ENCODE measurements at regions of chr1 and their contacts with region 1.

Region 1: DNA sequence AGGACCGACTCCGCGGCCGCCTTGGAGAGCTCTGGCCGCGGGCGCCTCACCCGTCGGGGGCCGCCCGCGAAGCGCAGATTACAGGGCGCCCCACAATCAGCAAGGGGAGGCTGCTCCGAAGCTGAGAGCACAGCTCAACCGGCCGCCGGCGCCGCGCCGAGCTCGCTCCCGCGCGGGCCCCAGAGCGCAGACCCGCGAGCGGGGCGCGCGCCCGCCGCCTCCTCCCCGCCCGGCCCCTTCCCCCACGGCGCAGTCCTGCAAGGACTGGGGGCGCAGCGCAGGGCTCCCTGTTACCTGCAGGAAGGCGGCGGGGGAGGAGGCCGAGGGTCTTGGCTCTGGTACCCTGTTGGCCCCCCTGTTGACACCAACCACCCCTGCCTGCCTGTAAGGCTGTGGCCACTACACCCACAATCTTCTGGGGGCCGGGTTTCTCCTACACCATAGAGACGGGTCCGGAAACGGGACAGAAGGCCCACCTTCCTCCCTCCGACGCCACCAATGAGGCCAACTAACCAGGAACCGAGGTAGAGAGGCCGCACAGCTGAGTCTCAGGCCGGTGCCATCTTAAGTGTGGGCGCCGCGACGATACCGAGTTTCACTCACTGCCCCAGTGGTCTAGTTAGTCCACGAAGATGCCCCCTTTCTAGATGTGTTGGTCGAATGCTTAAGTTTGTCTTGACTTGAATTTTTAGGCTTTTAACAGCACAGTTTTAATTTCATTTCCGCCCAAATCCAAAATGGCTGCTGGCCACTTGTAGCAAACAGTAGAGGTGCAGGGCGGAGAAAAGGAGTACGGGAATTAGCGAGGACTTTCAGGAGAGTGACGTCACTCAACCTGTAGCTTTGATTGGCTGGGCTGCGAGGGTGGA is at the start of gene SCYL3:
- DNase-seq: peak; percentile 96 to 97 (median 96)
- H3K4me3 ChIP-seq: peak within 1 kb of the TSS; percentile 58 to 86
- H3K4me3 Mint-ChIP-seq: peak within 1 kb of the TSS; percentile 92 to 97 (median 94)
- H3K27ac ChIP-seq: peak within 1 kb of the TSS; percentile 98
- H3K27ac Mint-ChIP-seq: peak within 1 kb of the TSS; percentile 97 to 100 (median 100)
- H3K4me1 ChIP-seq: peaks cover 46% of the 10 kb centered on the region
- H3K4me1 Mint-ChIP-seq: peaks cover 35 to 51% (median 43%) of the 10 kb centered on the region in 4 donors
- H3K27me3 ChIP-seq: no peaks in the 10 kb centered on the region
- H3K27me3 Mint-ChIP-seq: peaks cover 0 to 2% of the 10 kb centered on the region in 2 donors
- total RNA-seq, gene SCYL3: 23.5 to 24.3 TPM

Region 2: DNA sequence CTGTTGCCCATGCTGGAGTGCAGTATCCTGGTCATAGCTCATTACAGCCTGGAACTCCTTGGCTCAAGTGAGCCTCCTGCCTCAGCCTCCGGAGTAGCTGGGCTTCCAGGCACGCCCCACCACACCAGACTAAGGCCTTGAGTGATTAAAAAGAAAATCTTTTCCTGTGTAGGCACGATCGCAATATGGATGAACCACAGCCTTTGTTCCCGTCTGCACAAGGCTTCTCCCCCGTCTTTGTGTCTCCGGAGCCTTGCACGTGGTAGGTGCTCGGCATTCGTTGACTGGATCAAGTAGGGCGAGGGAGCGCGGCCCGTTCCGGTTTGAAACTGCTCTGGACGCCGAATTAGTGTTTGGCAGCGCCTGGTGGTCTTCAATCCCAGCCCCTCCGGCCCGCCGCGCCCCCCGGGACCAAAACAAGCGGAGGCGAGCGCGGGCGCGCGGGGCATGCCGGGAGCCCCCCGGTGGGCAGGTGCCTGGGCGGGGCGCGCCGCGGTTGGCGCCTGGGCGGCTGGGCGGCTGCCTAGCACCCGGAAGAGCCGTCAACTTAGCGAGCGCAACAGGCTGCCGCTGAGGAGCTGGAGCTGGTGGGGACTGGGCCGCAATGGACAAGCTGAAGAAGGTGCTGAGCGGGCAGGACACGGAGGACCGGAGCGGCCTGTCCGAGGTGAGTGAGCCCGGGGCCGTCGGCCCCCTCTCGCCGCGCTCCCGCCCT is 1668.1 kb before region 1 on chr1 and contains the start of gene SFT2D2:
- CTCF ChIA-PET with region 1: no interaction called
- POLR2A ChIA-PET with region 1: no interaction called
- intact Hi-C with region 1: loop called (anchors 5 kb)
- DNase-seq: peak; percentile 78 to 85 (median 81)
- H3K4me3 ChIP-seq: peak within 1 kb of the TSS; percentile 70 to 84
- H3K4me3 Mint-ChIP-seq: peak within 1 kb of the TSS; percentile 95 to 98 (median 96)
- H3K27ac ChIP-seq: peak within 1 kb of the TSS; percentile 80
- H3K27ac Mint-ChIP-seq: peak within 1 kb of the TSS; percentile 87 to 98 (median 96)
- H3K4me1 ChIP-seq: peaks cover 31% of the 10 kb centered on the region
- H3K4me1 Mint-ChIP-seq: peaks cover 25 to 48% (median 38%) of the 10 kb centered on the region in 4 donors
- H3K27me3 ChIP-seq: no peaks in the 10 kb centered on the region
- H3K27me3 Mint-ChIP-seq: peaks cover 2% of the 10 kb centered on the region in 2 donors
- total RNA-seq, gene SFT2D2: 61.7 to 63.2 TPM

Region 3: GRCh38 chr1:169794530-169795416 is 99.0 kb before region 1 on chr1 and contains the start of gene METTL18:
- CTCF ChIA-PET with region 1: interaction called, 6 read pairs
- POLR2A ChIA-PET with region 1: interaction called, 57 read pairs
- intact Hi-C with region 1: loop called (anchors 1 kb)
- DNase-seq: peak; percentile 92 to 95 (median 93)
- H3K4me3 ChIP-seq: peak within 1 kb of the TSS; percentile 90 to 93
- H3K4me3 Mint-ChIP-seq: peak within 1 kb of the TSS; percentile 96 to 100 (median 98)
- H3K27ac ChIP-seq: peak within 1 kb of the TSS; percentile 93
- H3K27ac Mint-ChIP-seq: peak within 1 kb of the TSS; percentile 90 to 100 (median 99)
- H3K4me1 ChIP-seq: peaks cover 30% of the 10 kb centered on the region
- H3K4me1 Mint-ChIP-seq: peaks cover 36 to 56% (median 48%) of the 10 kb centered on the region in 4 donors
- H3K27me3 ChIP-seq: no peaks in the 10 kb centered on the region
- H3K27me3 Mint-ChIP-seq: no peaks in the 10 kb centered on the region
- total RNA-seq, gene METTL18: 21.0 to 23.8 TPM

Region 4: GRCh38 chr1:169824153-169824552 is 69.6 kb before region 1 on chr1:
- CTCF ChIA-PET with region 1: no interaction called
- POLR2A ChIA-PET with region 1: no interaction called
- intact Hi-C with region 1: no loop called
- DNase-seq: no peak
- H3K4me3 ChIP-seq: no peak overlapping the region
- H3K4me3 Mint-ChIP-seq: no peak overlapping the region
- H3K27ac ChIP-seq: no peak overlapping the region
- H3K27ac Mint-ChIP-seq: peak overlapping the region in 2 of 7 donors; percentile 32 to 40
- H3K4me1 ChIP-seq: no peaks in the 10 kb centered on the region
- H3K4me1 Mint-ChIP-seq: peaks cover 0 to 3% (median 0%) of the 10 kb centered on the region in 4 donors
- H3K27me3 ChIP-seq: no peaks in the 10 kb centered on the region
- H3K27me3 Mint-ChIP-seq: no peaks in the 10 kb centered on the region

Region 5: GRCh38 chr1:169928438-169929209 is 34.9 kb after region 1 on chr1:
- CTCF ChIA-PET with region 1: interaction called, 5 read pairs
- POLR2A ChIA-PET with region 1: interaction called, 14 read pairs
- intact Hi-C with region 1: loop called (anchors 2 kb)
- DNase-seq: peak in 4 of 5 donors; percentile 45 to 58 (median 49)
- H3K4me3 ChIP-seq: no peak overlapping the region
- H3K4me3 Mint-ChIP-seq: peak overlapping the region in 1 of 8 donors; percentile 2
- H3K27ac ChIP-seq: no peak overlapping the region
- H3K27ac Mint-ChIP-seq: peak overlapping the region in 1 of 7 donors; percentile 74
- H3K4me1 ChIP-seq: peaks cover 9% of the 10 kb centered on the region
- H3K4me1 Mint-ChIP-seq: peaks cover 6 to 11% (median 7%) of the 10 kb centered on the region in 4 donors
- H3K27me3 ChIP-seq: no peaks in the 10 kb centered on the region
- H3K27me3 Mint-ChIP-seq: no peaks in the 10 kb centered on the region

Region 6: DNA sequence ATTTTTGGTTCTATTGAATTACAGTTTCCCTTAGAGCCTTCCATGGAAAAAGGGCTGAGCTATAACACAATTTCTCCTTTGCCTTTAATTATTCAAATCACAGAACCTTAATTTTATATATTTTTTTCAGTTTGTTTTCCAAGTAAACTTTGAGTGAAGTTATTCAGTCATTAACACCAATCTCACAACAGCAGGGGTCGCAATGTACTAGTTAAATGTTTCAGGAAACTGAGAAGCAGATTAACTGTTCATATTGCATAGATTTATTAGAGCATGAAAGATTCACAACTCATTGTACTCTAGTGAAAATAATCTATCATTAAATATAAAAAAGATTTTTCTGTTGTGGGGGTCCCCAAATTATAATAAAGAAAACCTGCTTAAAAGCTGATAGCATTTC is 116.7 kb after region 1 on chr1:
- CTCF ChIA-PET with region 1: no interaction called
- POLR2A ChIA-PET with region 1: no interaction called
- intact Hi-C with region 1: no loop called
- DNase-seq: peak in 2 of 5 donors; percentile 2 to 28
- H3K4me3 ChIP-seq: no peak overlapping the region
- H3K4me3 Mint-ChIP-seq: no peak overlapping the region
- H3K27ac ChIP-seq: no peak overlapping the region
- H3K27ac Mint-ChIP-seq: no peak overlapping the region
- H3K4me1 ChIP-seq: no peaks in the 10 kb centered on the region
- H3K4me1 Mint-ChIP-seq: peaks cover 0 to 2% (median 0%) of the 10 kb centered on the region in 4 donors
- H3K27me3 ChIP-seq: no peaks in the 10 kb centered on the region
- H3K27me3 Mint-ChIP-seq: no peaks in the 10 kb centered on the region

Region 7: DNA sequence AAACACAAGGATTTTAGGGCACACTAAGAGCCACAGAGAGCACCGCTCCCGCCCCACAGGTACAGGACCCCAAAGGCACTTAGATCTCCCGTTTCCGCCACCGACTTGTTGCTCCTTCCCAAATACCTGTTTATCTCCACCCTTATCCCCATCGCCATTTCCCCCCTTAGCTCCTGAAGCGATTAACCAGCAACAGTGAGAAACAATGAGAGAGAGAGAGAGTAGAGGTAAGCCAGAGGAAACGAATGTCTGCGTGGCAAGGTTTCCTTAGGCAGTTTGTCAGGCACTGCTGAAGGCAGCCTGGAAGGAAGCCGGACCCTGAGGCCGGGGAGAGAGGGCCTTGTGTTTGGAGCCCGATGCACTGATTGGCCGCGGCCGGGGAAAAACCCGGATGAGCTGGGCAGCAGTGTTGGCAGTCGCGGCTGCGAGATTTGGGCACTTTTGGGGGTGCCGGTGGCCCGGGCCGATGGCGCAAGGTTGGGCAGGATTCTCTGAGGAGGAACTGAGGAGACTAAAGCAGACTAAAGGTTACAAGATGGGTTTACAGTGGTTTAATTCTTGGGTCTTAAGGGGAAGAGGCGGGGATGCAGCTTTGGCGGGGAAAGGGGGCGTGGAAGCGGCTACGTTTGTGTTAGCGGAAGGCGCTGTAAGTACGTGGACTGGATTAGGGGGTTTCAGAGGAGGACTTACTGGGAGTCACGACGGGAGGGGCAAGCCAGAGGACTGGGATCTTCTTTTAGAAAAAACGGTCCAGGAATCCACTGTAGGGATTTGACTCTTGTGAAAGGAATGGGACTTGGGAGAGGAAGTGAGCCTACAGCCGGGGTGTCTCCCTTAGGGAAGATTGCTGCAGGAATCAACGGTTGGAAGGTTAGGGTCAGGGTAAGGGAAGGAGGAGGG is 638.3 kb after region 1 on chr1 and contains the start of gene GORAB:
- CTCF ChIA-PET with region 1: no interaction called
- POLR2A ChIA-PET with region 1: interaction called, 9 read pairs
- intact Hi-C with region 1: loop called (anchors 1 kb)
- DNase-seq: peak; percentile 84 to 93 (median 90)
- H3K4me3 ChIP-seq: peak within 1 kb of the TSS; percentile 87 to 90
- H3K4me3 Mint-ChIP-seq: no peak within 1 kb of the TSS
- H3K27ac ChIP-seq: peak within 1 kb of the TSS; percentile 92
- H3K27ac Mint-ChIP-seq: peak within 1 kb of the TSS in 3 of 7 donors; percentile 44 to 75 (median 51)
- H3K4me1 ChIP-seq: peaks cover 27% of the 10 kb centered on the region
- H3K4me1 Mint-ChIP-seq: peaks cover 11 to 22% (median 12%) of the 10 kb centered on the region in 4 donors
- H3K27me3 ChIP-seq: no peaks in the 10 kb centered on the region
- H3K27me3 Mint-ChIP-seq: no peaks in the 10 kb centered on the region
- total RNA-seq, gene GORAB: 17.0 to 24.1 TPM

Measured in CD4-positive, alpha-beta memory T cell (primary cell).